ENCODE measurements at regions of chr13 and their contacts with region 1.

Region 1: DNA sequence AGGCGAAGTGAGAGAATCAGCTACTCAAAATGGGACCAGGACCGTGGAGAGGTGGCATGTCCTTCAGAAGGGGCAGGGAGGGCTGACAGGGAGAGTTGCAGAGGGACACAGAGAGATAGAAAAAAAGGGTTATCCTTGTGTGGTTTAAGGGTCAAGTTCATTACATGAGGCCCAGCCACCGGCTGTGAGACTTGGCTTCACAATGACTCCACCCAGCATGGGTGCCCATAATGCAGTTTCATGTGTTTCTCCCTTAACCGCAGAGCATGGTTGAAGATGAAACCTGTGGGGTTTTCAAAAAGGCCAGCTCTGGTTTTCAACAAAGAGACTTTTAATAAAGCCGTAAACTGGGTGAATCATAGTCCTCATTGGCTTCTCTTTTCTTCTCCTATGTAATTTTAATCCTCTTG is 164.6 kb downstream of the KLF5 start:
- DNase-seq: peak; percentile 78
- H3K4me3 ChIP-seq: no peak overlapping the region
- H3K27ac ChIP-seq: no peak overlapping the region
- H3K4me1 ChIP-seq: peaks cover 11% of the 10 kb centered on the region
- H3K27me3 ChIP-seq: no peaks in the 10 kb centered on the region
- CTCF ChIP-seq: no peak

Region 2: DNA sequence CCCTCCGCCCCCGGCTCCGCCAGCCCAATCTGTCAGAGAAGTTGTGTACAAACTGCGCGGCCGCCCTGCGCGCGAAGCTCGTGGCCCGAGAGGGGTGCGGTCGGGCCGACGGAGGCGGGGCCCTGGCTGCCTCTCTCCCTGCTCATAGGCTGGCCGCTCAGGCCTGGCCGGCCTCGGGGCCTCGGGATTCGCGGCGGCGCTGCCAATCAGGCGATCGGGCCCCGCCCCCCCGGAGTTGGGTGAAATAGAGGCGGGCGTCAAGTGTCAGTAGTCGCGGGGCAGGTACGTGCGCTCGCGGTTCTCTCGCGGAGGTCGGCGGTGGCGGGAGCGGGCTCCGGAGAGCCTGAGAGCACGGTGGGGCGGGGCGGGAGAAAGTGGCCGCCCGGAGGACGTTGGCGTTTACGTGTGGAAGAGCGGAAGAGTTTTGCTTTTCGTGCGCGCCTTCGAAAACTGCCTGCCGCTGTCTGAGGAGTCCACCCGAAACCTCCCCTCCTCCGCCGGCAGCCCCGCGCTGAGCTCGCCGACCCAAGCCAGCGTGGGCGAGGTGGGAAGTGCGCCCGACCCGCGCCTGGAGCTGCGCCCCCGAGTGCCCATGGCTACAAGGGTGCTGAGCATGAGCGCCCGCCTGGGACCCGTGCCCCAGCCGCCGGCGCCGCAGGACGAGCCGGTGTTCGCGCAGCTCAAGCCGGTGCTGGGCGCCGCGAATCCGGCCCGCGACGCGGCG is 164.5 kb before region 1 on chr13 and contains the start of gene KLF5:
- CTCF ChIA-PET with region 1: no interaction called
- dilution Hi-C with region 1: no loop called
- in situ Hi-C with region 1: no loop called
- intact Hi-C with region 1: loop called (anchors 1 kb)
- DNase-seq: peak; percentile 99
- H3K4me3 ChIP-seq: peak within 1 kb of the TSS; percentile 61 to 99 (median 86)
- H3K27ac ChIP-seq: peak within 1 kb of the TSS; percentile 99
- H3K4me1 ChIP-seq: peaks cover 43% of the 10 kb centered on the region
- H3K27me3 ChIP-seq: no peaks in the 10 kb centered on the region
- CTCF ChIP-seq: no peak
- total RNA-seq, gene KLF5: 34.3 to 175 TPM

Region 3: DNA sequence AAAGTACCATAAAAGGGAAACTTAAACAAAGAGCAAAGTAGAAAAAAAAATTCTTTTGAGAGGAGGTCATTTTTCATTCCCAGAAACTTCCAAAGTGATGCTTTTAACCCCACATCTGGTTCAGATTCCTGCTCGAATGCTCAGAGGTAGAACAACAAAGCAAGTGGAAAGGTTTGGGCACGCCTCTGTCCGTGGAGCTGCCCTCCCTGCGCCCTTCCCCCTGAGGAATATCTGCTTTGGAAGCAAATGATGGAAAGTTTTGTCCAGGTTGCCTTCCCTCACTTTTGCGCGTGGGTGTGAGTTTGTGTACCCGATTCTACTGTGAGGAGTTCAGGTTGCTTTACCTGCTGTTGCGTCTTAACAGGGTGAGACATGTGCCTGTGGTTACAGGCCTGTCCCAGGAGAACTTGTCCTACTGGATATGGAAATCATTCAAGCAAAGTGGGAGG is 54.4 kb before region 1 on chr13:
- CTCF ChIA-PET with region 1: no interaction called
- dilution Hi-C with region 1: no loop called
- in situ Hi-C with region 1: no loop called
- intact Hi-C with region 1: loop called (anchors 5 kb)
- DNase-seq: peak; percentile 94
- H3K4me3 ChIP-seq: no peak overlapping the region
- H3K27ac ChIP-seq: peak overlapping the region; percentile 98
- H3K4me1 ChIP-seq: peaks cover 50% of the 10 kb centered on the region
- H3K27me3 ChIP-seq: no peaks in the 10 kb centered on the region
- CTCF ChIP-seq: no peak

Region 4: DNA sequence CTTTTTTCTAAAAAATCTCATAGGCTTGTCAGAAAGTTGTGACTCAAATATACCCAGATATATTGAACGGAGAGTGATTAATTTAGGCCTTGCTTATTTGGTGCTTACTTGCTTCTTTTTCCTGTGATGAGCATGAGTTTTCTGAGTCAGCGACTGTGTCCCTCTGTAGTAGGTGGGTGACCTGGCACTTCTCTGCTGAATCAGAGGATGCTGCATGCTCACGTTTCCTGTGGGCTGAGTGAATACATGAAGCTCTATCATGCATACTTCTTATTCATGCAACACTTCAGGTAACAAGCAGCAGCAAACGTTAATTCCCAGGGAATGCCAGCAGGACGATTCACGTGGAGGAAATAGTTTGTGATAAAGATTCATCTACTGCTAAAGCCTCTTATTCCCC is 80.5 kb after region 1 on chr13:
- CTCF ChIA-PET with region 1: interaction called, 3 read pairs
- dilution Hi-C with region 1: no loop called
- in situ Hi-C with region 1: no loop called
- intact Hi-C with region 1: loop called (anchors 1 kb)
- DNase-seq: peak; percentile 92
- H3K4me3 ChIP-seq: no peak overlapping the region
- H3K27ac ChIP-seq: peak overlapping the region; percentile 52
- H3K4me1 ChIP-seq: peaks cover 13% of the 10 kb centered on the region
- H3K27me3 ChIP-seq: no peaks in the 10 kb centered on the region
- CTCF ChIP-seq: no peak